Activated CD4-positive, alpha-beta memory T cell treated with anti-CD3 and anti-CD28 coated beads for 36 hours (primary cell): ENCODE measurements at regions of chrX and their contacts with region 1.

Region 1: GRCh38 chrX:11137543-11138139 is 26.5 kb downstream of the HCCS start:
- DNase-seq: no peak
- H3K4me3 Mint-ChIP-seq: no peak overlapping the region
- H3K27ac Mint-ChIP-seq: no peak overlapping the region
- H3K4me1 Mint-ChIP-seq: no peaks in the 10 kb centered on the region
- H3K27me3 Mint-ChIP-seq: peaks cover 4% of the 10 kb centered on the region

Region 2: GRCh38 chrX:10722851-10723250 is 414.8 kb before region 1 on chrX:
- CTCF ChIA-PET with region 1: interaction called, 4 read pairs
- POLR2A ChIA-PET with region 1: no interaction called
- intact Hi-C with region 1: loop called (anchors 5 kb)
- DNase-seq: peak; percentile 17
- H3K4me3 Mint-ChIP-seq: no peak overlapping the region
- H3K27ac Mint-ChIP-seq: no peak overlapping the region
- H3K4me1 Mint-ChIP-seq: no peaks in the 10 kb centered on the region
- H3K27me3 Mint-ChIP-seq: no peaks in the 10 kb centered on the region

Region 3: GRCh38 chrX:11125060-11125459 is 12.6 kb before region 1 on chrX:
- CTCF ChIA-PET with region 1: no interaction called
- POLR2A ChIA-PET with region 1: no interaction called
- intact Hi-C with region 1: no loop called
- DNase-seq: no peak
- H3K4me3 Mint-ChIP-seq: no peak overlapping the region
- H3K27ac Mint-ChIP-seq: no peak overlapping the region
- H3K4me1 Mint-ChIP-seq: no peaks in the 10 kb centered on the region
- H3K27me3 Mint-ChIP-seq: no peaks in the 10 kb centered on the region